Endothelial cell of umbilical vein (primary cell): ENCODE measurements at regions of chr15 and their contacts with region 1.

Region 1: GRCh38 chr15:85044251-85044853 is 62.7 kb downstream of the PDE8A start:
- DNase-seq: peak; percentile 80
- H3K4me3 ChIP-seq: no peak overlapping the region
- H3K27ac ChIP-seq: no peak overlapping the region
- H3K4me1 ChIP-seq: peaks cover 38% of the 10 kb centered on the region
- H3K27me3 ChIP-seq: no peaks in the 10 kb centered on the region
- CTCF ChIP-seq: peak; percentile 45 to 59
- POLR2A ChIP-seq: no peak

Region 2: DNA sequence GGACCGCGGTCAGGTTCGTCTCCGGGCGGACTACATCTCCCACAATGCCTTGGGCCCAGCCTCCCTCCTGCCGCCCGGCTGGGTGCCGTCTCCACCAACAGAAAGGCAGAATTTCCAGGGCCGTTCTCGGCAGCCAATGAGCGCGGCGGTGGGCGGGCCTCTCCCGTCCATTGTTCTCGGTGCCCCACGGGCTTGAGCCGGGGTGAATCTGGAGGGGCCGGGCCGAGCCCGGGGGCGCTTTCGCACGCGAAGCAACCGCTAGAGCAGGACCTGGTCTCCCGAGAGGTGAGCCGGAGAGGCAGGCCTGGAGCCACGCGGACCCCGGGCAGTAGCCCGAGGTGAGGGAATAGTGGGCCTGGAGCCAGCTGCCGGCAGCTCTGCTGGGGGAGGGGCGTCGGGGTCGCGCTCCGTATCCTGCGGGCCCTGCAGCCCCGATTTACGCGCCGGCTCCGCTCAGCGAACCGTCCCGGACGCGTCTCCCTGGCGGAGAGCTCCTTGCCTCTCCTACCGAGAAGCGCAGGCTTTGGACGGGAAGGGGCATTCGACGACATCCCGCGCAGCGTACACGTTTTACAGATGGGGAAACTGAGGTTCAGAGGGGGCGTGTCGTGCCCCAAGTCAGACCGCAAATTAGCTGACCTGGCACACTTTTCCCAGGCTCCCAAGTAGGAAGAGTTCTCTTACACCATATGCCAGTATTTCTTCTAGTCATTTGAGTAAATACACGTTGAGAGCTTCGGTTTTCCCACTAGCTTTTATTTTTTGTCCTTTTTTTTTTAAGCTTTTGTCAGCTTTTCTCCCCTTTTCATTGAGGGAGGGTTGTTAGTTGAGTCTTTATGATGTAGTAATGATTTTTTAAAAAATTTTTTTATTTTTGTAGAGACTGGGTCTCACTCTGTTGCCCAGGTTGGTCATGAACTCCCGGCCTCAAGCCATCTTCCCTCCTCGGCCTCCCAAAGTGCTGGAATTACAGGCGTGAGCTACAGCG is 443.2 kb before region 1 on chr15 and contains the start of gene ZSCAN2:
- CTCF ChIA-PET with region 1: interaction called, 20 read pairs
- POLR2A ChIA-PET with region 1: no interaction called
- dilution Hi-C with region 1: no loop called
- intact Hi-C with region 1: no loop called
- DNase-seq: peak; percentile 96
- H3K4me3 ChIP-seq: peak within 1 kb of the TSS; percentile 46 to 66 (median 54)
- H3K27ac ChIP-seq: peak within 1 kb of the TSS; percentile 56
- H3K4me1 ChIP-seq: no peaks in the 10 kb centered on the region
- H3K27me3 ChIP-seq: no peaks in the 10 kb centered on the region
- CTCF ChIP-seq: peak in 1 of 2 donors; percentile 10
- POLR2A ChIP-seq: peak; percentile 56
- total RNA-seq, gene ZSCAN2: 13.5 TPM in 2 replicates

Region 3: DNA sequence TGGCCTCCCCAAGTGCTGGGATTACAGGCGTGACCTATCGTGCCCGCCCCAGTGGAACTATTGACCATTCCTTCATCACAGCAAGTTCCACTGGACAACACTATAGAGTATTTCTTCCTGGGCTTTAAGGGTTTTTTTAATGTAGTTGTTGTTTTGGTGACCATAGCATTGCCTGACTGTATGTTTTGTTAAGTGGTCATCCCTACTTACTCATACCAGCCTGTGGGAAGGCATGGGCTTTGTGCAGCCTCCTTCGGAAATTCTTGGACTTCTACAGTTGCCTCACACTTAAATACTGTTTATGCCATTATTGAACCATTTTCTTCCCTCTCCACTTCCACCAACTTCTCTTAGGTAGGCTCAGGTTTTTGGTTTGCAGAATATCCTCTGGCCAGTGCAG is 247.1 kb before region 1 on chr15:
- CTCF ChIA-PET with region 1: no interaction called
- POLR2A ChIA-PET with region 1: no interaction called
- dilution Hi-C with region 1: no loop called
- intact Hi-C with region 1: no loop called
- DNase-seq: no peak
- H3K4me3 ChIP-seq: no peak overlapping the region
- H3K27ac ChIP-seq: no peak overlapping the region
- H3K4me1 ChIP-seq: no peaks in the 10 kb centered on the region
- H3K27me3 ChIP-seq: no peaks in the 10 kb centered on the region
- CTCF ChIP-seq: no peak
- POLR2A ChIP-seq: no peak

Region 4: DNA sequence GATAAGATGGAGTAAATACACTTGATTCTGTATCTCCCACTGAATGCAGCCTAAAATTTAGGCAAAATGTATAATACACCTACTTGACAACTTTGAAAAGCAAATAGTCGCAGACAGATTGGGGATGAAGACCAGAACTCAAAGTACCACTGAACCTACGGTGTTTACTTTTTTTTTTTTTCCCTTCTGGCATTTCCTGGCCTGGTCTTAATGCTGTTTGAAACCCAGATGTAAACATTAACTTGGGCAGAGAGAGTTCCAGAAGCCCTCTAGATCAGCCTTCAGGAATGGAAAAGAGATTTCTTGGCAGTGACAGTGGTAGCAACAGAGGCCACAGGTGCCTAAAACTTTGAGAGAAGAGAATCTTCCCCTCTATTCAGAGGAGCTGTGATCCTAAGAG is 199.4 kb before region 1 on chr15:
- CTCF ChIA-PET with region 1: interaction called, 5 read pairs
- POLR2A ChIA-PET with region 1: no interaction called
- dilution Hi-C with region 1: no loop called
- intact Hi-C with region 1: loop called (anchors 2 kb)
- DNase-seq: no peak
- H3K4me3 ChIP-seq: no peak overlapping the region
- H3K27ac ChIP-seq: no peak overlapping the region
- H3K4me1 ChIP-seq: no peaks in the 10 kb centered on the region
- H3K27me3 ChIP-seq: no peaks in the 10 kb centered on the region
- CTCF ChIP-seq: no peak
- POLR2A ChIP-seq: no peak

Region 5: GRCh38 chr15:84955089-84955848 is 89.1 kb before region 1 on chr15:
- CTCF ChIA-PET with region 1: interaction called, 92 read pairs
- POLR2A ChIA-PET with region 1: no interaction called
- dilution Hi-C with region 1: no loop called
- intact Hi-C with region 1: loop called (anchors 1 kb)
- DNase-seq: peak; percentile 84
- H3K4me3 ChIP-seq: no peak overlapping the region
- H3K27ac ChIP-seq: no peak overlapping the region
- H3K4me1 ChIP-seq: peaks cover 24% of the 10 kb centered on the region
- H3K27me3 ChIP-seq: no peaks in the 10 kb centered on the region
- CTCF ChIP-seq: peak; percentile 80 to 91
- POLR2A ChIP-seq: no peak

Region 6: GRCh38 chr15:84981054-84981710 is 63.2 kb before region 1 on chr15:
- CTCF ChIA-PET with region 1: interaction called, 24 read pairs
- POLR2A ChIA-PET with region 1: no interaction called
- dilution Hi-C with region 1: no loop called
- intact Hi-C with region 1: loop called (anchors 1 kb)
- DNase-seq: peak; percentile 97
- H3K4me3 ChIP-seq: peak overlapping the region; percentile 63 to 91 (median 86)
- H3K27ac ChIP-seq: peak overlapping the region; percentile 90
- H3K4me1 ChIP-seq: peaks cover 16% of the 10 kb centered on the region
- H3K27me3 ChIP-seq: no peaks in the 10 kb centered on the region
- CTCF ChIP-seq: peak in 1 of 2 donors; percentile 40
- POLR2A ChIP-seq: no peak

Region 7: GRCh38 chr15:85030301-85031049 is 13.9 kb before region 1 on chr15:
- CTCF ChIA-PET with region 1: interaction called, 13 read pairs
- POLR2A ChIA-PET with region 1: no interaction called
- dilution Hi-C with region 1: no loop called
- intact Hi-C with region 1: loop called (anchors 2 kb)
- DNase-seq: peak; percentile 82
- H3K4me3 ChIP-seq: no peak overlapping the region
- H3K27ac ChIP-seq: peak overlapping the region; percentile 94
- H3K4me1 ChIP-seq: peaks cover 45% of the 10 kb centered on the region
- H3K27me3 ChIP-seq: no peaks in the 10 kb centered on the region
- CTCF ChIP-seq: no peak
- POLR2A ChIP-seq: no peak

Region 8: DNA sequence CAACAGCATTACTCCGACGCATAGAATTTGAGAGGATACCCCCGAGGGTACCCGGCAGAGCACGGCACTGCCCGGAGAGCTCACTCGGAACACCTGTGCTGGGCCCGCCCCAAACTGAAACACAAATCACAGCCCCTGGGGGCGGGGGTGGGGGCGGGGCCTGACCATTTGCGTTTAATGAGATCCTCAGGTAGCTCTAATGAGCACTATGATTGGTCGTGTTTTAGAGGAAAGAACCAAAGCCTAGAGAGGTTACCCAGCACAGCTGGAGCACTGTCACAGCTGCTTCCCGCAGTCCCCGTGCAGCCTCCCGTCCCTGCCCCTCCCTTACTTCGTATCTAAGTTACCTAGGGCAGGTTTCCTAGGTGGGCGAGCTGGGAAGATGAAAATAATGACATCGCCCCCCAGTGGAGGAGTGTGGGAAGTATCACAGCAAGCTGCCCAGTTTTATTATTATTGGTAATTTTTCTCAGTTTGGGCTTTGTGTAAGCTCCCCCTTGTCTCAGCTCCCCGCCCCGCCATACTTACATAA is 124.4 kb after region 1 on chr15:
- CTCF ChIA-PET with region 1: interaction called, 12 read pairs
- POLR2A ChIA-PET with region 1: no interaction called
- dilution Hi-C with region 1: no loop called
- intact Hi-C with region 1: no loop called
- DNase-seq: peak; percentile 55
- H3K4me3 ChIP-seq: peak overlapping the region in 2 of 3 experiments; percentile 10 to 32
- H3K27ac ChIP-seq: no peak overlapping the region
- H3K4me1 ChIP-seq: no peaks in the 10 kb centered on the region
- H3K27me3 ChIP-seq: no peaks in the 10 kb centered on the region
- CTCF ChIP-seq: peak; percentile 58 to 63
- POLR2A ChIP-seq: no peak